Caco-2 (cell line): ENCODE measurements at regions of chr3 and their contacts with region 1.

Region 1: GRCh38 chr3:170277833-170278580 is 55.8 kb downstream of the PRKCI start:
- DNase-seq: no peak
- H3K4me3 ChIP-seq: no peak overlapping the region
- H3K4me3 Mint-ChIP-seq: no peak overlapping the region
- H3K27ac Mint-ChIP-seq: no peak overlapping the region
- H3K4me1 ChIP-seq: no peaks in the 10 kb centered on the region; the same call in 1 of the 2 replicates
- H3K4me1 Mint-ChIP-seq: peaks cover 11% of the 10 kb centered on the region
- H3K27me3 ChIP-seq: no peaks in the 10 kb centered on the region
- H3K27me3 Mint-ChIP-seq: no peaks in the 10 kb centered on the region
- CTCF ChIP-seq: no peak

Region 2: GRCh38 chr3:169112153-169112892 is 1165.7 kb before region 1 on chr3:
- CTCF ChIA-PET with region 1: no interaction called
- POLR2A ChIA-PET with region 1: no interaction called
- intact Hi-C with region 1: no loop called
- DNase-seq: no peak
- H3K4me3 ChIP-seq: no peak overlapping the region
- H3K4me3 Mint-ChIP-seq: no peak overlapping the region
- H3K27ac Mint-ChIP-seq: no peak overlapping the region
- H3K4me1 ChIP-seq: 0 out of 2 replicates have a peak, but pooled peaks cover 5% of the 10 kb centered on the region
- H3K4me1 Mint-ChIP-seq: peaks cover 3% of the 10 kb centered on the region
- H3K27me3 ChIP-seq: no peaks in the 10 kb centered on the region
- H3K27me3 Mint-ChIP-seq: no peaks in the 10 kb centered on the region
- CTCF ChIP-seq: no peak

Region 3: DNA sequence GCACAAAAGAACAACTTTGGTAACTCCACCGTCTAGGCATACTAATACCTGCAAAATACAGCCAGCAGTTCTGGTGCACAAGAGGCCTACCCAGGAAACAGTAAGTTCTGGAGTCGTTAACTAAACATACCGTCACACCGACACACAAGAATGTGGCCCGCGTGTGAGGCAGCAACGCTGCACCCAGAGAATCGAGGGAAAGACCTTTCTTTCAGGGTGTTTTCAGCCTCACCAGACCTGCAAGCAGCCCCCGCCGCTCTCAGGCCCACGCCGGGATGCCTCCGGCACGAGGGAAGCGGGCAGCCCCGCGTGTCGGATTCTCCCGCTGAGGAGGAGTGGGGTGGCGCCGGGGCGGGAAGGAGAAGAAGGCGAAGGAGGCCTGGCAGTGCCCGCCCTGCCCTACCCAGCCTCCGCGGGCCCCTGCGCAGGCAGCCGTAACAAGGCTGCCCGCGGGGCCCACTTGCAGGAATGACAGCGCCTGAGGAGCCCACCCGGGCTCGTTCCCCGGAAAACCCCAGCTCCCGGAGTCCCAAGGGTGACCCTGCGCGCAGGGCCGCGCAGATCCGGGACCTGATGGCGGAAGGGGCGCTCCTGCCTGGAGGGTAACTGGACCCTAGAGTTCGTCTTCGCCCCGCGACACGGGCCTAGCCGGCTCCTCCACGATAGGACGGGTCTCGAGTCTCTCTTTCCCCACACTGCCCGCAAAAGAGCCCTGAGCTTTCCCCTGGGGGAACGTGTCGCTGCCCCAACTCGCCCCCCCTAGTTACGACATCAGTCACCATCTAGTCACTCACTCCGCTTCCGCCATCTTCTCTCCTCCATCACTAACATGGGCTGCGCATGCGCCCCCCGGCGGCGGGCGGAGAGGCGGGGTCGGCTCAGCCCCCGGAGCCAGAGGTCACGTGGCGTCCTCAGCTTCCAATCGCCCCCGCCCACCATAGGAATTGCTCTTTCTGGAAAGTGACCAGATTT is 96.8 kb before region 1 on chr3 and contains the start of gene PHC3:
- CTCF ChIA-PET with region 1: no interaction called
- POLR2A ChIA-PET with region 1: no interaction called
- intact Hi-C with region 1: loop called (anchors 10 kb)
- DNase-seq: peak; percentile 93 to 95
- H3K4me3 ChIP-seq: peak within 1 kb of the TSS; percentile 54
- H3K4me3 Mint-ChIP-seq: peak within 1 kb of the TSS; percentile 95
- H3K27ac Mint-ChIP-seq: peak within 1 kb of the TSS; percentile 97
- H3K4me1 ChIP-seq: peaks cover 10% of the 10 kb centered on the region
- H3K4me1 Mint-ChIP-seq: peaks cover 12% of the 10 kb centered on the region
- H3K27me3 ChIP-seq: no peaks in the 10 kb centered on the region
- H3K27me3 Mint-ChIP-seq: no peaks in the 10 kb centered on the region
- CTCF ChIP-seq: peak in 1 of 2 experiments; percentile 8
- total RNA-seq, gene PHC3: 29.8 and 37.7 TPM in 2 replicates